Right ventricle myocardium superior (tissue), 1 donor: ENCODE measurements at regions of chr3 and their contacts with region 1.

Region 1: DNA sequence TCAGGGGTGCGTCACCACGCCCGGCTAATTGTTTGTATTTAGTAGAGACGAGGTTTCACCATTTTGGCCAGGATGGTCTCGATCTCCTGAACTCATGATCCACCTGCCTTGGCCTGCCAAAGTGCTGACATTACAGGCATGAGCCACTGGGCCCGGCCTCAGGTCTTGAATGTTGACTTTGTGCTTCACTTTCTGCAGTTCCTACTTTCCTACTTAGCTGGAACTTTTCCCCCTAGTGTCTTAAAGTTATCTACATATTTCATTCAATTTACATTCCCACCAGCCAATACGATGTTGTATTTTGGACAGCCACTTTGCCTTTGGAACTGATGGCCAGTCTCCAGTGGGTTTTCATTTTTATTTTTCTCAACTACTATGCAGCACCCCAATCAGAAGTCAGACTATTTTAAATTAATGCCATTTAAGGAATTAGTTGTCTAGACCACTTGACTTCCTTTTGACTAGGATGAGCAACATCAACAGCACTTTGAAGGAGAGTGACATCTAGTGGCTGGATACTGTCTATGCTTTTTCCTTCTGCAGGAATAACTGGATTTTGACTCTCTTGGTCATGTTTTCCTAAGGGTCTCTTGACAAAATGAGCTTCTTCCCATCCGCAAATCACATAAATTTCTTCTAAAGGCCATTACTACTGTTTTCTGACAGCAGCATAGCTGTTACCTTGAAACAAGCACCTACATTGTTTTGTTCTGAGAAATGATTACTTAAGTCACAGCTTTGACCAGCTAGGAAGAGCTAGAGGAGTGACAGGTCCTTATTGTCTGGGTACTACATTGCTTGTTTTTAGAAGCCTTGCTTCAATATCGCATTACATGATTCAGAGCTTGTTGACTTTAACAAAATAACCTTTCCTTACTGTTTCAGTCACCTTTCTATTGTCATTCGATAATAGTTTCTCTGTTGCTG is 140.2 kb downstream of the ITPR1 start:
- DNase-seq: no peak
- ATAC-seq: peak; percentile 84

Region 2: DNA sequence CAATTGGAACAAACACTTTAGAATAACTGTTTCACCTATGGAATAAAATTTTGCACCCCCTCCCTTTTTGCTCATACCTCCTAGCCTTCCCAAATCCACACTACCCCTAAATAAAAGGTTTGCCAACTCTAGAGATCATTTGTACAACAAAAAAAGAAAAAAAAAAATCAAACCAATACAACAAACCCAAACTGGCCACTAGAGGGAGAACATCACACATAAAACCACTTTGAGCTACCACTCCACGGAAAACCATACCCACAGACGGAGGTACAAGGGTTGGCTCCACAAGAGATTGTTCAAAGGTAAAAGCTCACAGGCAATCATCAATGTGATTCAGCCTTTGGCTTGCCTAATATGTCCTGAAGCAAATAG is 282.6 kb before region 1 on chr3:
- intact Hi-C with region 1: loop called (anchors 2 kb)
- DNase-seq: no peak
- ATAC-seq: peak; percentile 94

Region 3: GRCh38 chr3:4466741-4467521 is 166.4 kb before region 1 on chr3 and contains the start of gene SUMF1:
- intact Hi-C with region 1: loop called (anchors 5 kb)
- DNase-seq: peak; percentile 89
- ATAC-seq: peak; percentile 99
- total RNA-seq, gene SUMF1: 7.6 TPM

Region 4: DNA sequence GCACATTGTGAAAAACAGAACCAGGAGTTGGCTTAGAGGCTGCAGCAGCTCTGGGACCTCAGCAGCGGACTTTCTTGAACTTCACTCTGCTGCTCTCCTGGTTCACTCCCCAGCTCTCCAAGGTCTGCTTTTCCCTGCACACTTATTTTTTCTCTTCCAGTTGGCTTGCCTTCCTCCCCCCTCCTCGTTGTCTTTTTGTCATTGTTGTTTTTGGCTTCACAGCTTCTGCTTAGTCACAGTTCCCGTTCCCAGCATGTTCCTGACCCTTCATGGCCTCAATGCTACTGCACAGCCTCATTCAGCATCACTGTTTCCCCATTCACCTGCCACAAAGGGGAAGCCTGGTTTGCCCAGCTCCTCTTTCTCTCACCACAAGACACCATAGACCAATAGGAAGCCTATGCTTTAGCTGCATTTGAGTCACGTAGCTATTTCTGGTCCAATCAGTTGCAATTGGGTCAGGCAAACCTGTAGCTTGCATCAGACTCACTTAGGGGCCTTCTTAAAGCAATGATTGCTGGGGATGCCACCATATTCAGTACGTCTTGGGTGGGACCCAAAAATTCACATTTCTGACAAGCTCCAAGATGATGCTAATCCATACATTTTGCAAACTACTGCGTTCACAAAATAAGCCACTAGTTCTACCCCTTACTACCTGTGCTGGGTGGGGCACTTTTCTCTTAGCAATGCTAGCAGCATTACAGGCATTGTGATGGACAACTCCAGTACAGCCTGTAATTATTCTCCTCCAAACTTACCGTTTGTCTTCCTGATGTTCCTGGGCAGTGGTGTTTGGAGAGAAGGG is 158.5 kb before region 1 on chr3:
- intact Hi-C with region 1: loop called (anchors 5 kb)
- DNase-seq: no peak
- ATAC-seq: peak; percentile 85

Region 5: DNA sequence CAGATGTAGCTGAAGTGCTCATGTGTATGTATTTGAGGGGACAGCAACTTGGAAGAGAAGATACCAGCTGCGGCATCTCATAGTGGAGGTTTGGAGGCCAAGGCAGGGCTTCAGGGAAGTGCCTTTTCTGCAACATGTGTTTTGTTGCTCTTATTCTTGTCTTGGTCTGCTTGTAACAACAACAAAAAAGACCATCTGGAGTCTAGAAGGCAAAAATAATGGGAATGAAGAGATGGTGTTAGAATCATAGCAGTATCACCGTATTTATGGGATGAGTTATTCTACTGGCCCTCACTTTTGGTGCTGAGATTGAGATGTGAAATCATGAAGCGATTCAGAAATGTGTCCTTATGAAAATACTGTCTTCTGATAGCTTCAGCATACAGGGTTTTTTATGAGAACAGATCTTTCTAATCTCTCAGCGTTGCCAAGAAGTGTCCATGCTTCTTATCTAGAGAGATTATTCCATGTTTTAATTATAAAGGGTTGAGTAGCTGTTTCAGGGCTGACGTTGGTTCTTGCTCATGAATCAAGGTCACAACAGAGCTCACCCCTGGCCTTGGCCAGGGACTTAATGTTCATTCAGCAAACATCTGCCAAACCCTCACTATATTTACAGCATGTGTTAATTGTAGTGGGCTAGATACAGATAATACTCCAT is 82.2 kb before region 1 on chr3:
- intact Hi-C with region 1: no loop called
- DNase-seq: peak; percentile 60
- ATAC-seq: peak; percentile 81

Region 6: DNA sequence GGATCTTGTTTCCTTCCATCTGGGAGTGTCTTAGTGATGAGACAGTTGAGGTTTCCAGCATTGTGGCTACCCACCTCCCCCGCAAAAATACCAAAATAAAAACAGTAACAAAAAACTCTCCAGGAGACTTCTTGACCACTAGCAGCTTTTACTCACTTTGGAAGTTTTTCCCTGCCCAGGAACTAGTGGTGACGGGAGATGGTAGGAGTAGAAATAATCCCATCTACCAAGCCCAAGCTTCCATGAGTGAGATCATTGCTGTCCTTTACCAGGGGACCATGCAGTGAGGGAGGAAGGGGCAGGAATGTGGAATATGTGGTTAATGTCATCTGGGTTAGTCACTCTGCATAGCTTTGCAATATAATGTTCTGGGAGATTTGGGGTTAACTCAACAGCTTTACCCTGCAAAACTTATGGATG is 47.5 kb after region 1 on chr3:
- intact Hi-C with region 1: no loop called
- DNase-seq: no peak
- ATAC-seq: no peak

Region 7: DNA sequence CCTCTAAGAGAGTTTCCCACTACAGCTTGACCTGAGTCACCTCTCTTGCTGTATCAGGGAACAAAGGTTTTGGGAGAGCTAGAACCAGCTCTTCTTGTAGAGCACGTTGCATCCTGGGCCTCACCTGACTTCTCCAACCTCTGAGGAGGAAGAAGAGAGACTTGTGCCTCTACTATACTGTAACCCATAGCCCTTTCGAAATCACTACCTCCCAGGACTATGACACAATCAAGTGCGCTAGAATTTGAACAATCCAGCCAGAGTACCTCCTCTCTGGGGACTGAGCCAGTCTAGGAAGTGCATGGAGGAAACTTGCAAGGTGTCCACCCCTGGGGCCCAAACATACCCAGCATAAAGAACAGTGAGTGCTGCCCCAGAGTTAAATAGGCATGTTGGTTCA is 153.1 kb after region 1 on chr3:
- intact Hi-C with region 1: no loop called
- DNase-seq: no peak
- ATAC-seq: no peak